ENCODE measurements at regions of chr6 and their contacts with region 1.

Region 1: DNA sequence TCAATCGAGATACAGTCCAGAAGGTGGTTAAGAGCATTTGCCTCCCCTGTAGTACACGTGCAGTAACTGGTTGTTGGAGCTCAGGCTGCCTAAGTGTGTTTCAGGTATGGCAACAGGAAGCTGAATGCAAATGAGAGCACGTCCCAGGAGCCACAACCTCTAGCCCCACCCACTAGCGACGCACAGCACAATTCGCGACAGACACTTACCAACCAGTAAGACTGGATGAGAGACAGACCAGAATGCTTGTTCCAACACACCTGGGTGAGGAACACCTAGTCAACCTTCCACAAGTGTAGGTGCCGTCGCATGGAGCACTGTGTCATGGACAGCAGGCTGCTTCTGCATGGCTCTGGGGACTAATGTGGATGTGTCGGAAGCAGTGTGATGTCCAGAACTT is 7.2 kb upstream of the SERPINB1 start:
- DNase-seq: no peak
- ATAC-seq: peak; percentile 36
- H3K4me3 ChIP-seq: no peak overlapping the region
- H3K27ac ChIP-seq: no peak overlapping the region
- H3K4me1 ChIP-seq: peaks cover 17% of the 10 kb centered on the region
- H3K27me3 ChIP-seq: no peaks in the 10 kb centered on the region
- CTCF ChIP-seq: no peak
- EP300 ChIP-seq: no peak
- POLR2A ChIP-seq: no peak
- RAD21 ChIP-seq: no peak

Region 2: GRCh38 chr6:2396846-2397630 is 451.8 kb before region 1 on chr6:
- CTCF ChIA-PET with region 1: no interaction called
- POLR2A ChIA-PET with region 1: no interaction called
- RAD21 ChIA-PET with region 1: no interaction called
- SMC1A ChIA-PET with region 1: no interaction called
- in situ Hi-C with region 1: no loop called
- intact Hi-C with region 1: no loop called
- DNase-seq: no peak
- ATAC-seq: no peak
- H3K4me3 ChIP-seq: no peak overlapping the region
- H3K27ac ChIP-seq: no peak overlapping the region
- H3K4me1 ChIP-seq: no peaks in the 10 kb centered on the region
- H3K27me3 ChIP-seq: no peaks in the 10 kb centered on the region; a peak in 1 of 4 replicates
- CTCF ChIP-seq: no peak
- EP300 ChIP-seq: no peak
- POLR2A ChIP-seq: no peak
- RAD21 ChIP-seq: no peak

Region 3: GRCh38 chr6:2611090-2611489 is 237.8 kb before region 1 on chr6:
- CTCF ChIA-PET with region 1: no interaction called
- POLR2A ChIA-PET with region 1: no interaction called
- RAD21 ChIA-PET with region 1: no interaction called
- SMC1A ChIA-PET with region 1: no interaction called
- in situ Hi-C with region 1: no loop called
- intact Hi-C with region 1: no loop called
- DNase-seq: no peak
- ATAC-seq: no peak
- H3K4me3 ChIP-seq: no peak overlapping the region
- H3K27ac ChIP-seq: no peak overlapping the region
- H3K4me1 ChIP-seq: no peaks in the 10 kb centered on the region
- H3K27me3 ChIP-seq: peaks cover 0 to 7% of the 10 kb centered on the region in 2 experiments; a peak in 3 of 4 replicates
- CTCF ChIP-seq: no peak
- EP300 ChIP-seq: no peak
- POLR2A ChIP-seq: no peak
- RAD21 ChIP-seq: no peak

Region 4: DNA sequence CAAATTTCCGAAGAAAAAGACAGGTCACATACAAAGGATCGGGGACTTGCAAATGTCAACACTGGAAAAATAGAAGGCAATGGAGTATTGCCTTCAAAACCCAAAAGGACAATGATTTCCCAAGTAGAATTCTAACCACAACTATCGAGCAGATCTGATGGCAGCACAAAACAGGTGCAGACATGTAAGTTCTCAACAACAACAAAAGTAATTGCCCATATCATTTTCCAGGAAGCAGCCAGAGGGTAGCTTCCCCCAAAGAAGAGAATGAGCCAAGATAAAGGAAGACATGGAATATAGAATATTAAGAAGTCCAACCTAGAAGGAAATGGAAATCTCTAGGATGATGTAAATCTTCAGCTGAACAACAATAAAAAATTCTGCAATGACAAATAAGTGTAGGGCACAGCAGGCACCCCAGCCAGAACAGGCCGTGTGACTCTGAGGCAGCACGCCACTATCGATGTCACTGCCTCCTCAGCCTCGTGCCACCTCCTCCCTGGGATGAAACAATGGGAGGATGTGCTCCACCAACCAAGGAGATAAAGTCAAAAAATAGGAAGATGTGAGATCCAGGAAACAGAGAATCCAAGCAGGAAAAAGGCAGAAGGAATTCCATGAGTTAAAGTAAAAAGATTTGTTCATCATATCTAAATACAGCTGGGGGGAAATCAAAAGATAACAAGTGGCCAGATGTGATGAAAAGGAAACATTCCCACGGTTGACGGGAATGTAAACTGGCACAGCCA is 41.3 kb before region 1 on chr6:
- CTCF ChIA-PET with region 1: no interaction called
- POLR2A ChIA-PET with region 1: no interaction called
- RAD21 ChIA-PET with region 1: no interaction called
- SMC1A ChIA-PET with region 1: no interaction called
- in situ Hi-C with region 1: no loop called
- intact Hi-C with region 1: no loop called
- DNase-seq: no peak
- ATAC-seq: no peak
- H3K4me3 ChIP-seq: no peak overlapping the region
- H3K27ac ChIP-seq: no peak overlapping the region
- H3K4me1 ChIP-seq: no peaks in the 10 kb centered on the region
- H3K27me3 ChIP-seq: no peaks in the 10 kb centered on the region
- CTCF ChIP-seq: no peak
- EP300 ChIP-seq: no peak
- POLR2A ChIP-seq: no peak
- RAD21 ChIP-seq: no peak

Region 5: DNA sequence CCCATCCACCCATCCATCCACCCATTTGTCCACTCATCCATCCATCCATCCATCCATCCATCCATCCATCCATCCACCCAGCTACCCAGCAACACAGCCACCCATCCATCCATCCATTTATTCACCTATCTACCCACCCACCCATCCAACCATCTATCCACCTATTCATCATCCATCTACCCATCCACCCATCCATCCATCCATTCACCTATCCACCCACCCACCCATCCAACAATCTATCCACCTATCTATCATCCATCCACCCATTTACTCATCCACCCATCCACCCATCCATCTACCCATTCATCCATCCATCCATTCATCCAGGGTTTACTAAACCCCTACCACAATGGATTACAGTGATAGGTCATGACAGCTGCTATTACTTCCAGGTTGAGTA is 14.6 kb before region 1 on chr6:
- CTCF ChIA-PET with region 1: interaction called, 5 read pairs
- POLR2A ChIA-PET with region 1: no interaction called
- RAD21 ChIA-PET with region 1: interaction called, 3 read pairs
- SMC1A ChIA-PET with region 1: interaction called, 12 read pairs
- in situ Hi-C with region 1: no loop called
- intact Hi-C with region 1: no loop called
- DNase-seq: no peak
- ATAC-seq: no peak
- H3K4me3 ChIP-seq: no peak overlapping the region
- H3K27ac ChIP-seq: no peak overlapping the region
- H3K4me1 ChIP-seq: no peaks in the 10 kb centered on the region
- H3K27me3 ChIP-seq: no peaks in the 10 kb centered on the region; a peak in 2 of 4 replicates
- CTCF ChIP-seq: no peak
- EP300 ChIP-seq: no peak
- POLR2A ChIP-seq: no peak
- RAD21 ChIP-seq: no peak

Region 6: GRCh38 chr6:2876210-2877056 is 27.6 kb after region 1 on chr6:
- CTCF ChIA-PET with region 1: interaction called, 25 read pairs
- POLR2A ChIA-PET with region 1: interaction called, 108 read pairs
- RAD21 ChIA-PET with region 1: interaction called, 77 read pairs
- SMC1A ChIA-PET with region 1: interaction called, 8 read pairs
- in situ Hi-C with region 1: no loop called
- intact Hi-C with region 1: loop called (anchors 1 kb)
- DNase-seq: no peak
- ATAC-seq: peak; percentile 51
- H3K4me3 ChIP-seq: 0 out of 2 replicates have a peak overlapping the region, but pooled peaks have one; percentile 18
- H3K27ac ChIP-seq: no peak overlapping the region
- H3K4me1 ChIP-seq: peaks cover 36% of the 10 kb centered on the region
- H3K27me3 ChIP-seq: no peaks in the 10 kb centered on the region
- CTCF ChIP-seq: no peak
- EP300 ChIP-seq: no peak
- POLR2A ChIP-seq: no peak; the same call in 1 of the 2 replicates
- RAD21 ChIP-seq: no peak

Region 7: GRCh38 chr6:2911171-2911570 is 62.3 kb after region 1 on chr6:
- CTCF ChIA-PET with region 1: interaction called, 143 read pairs
- POLR2A ChIA-PET with region 1: interaction called, 7 read pairs
- RAD21 ChIA-PET with region 1: interaction called, 88 read pairs
- SMC1A ChIA-PET with region 1: interaction called, 136 read pairs
- in situ Hi-C with region 1: loop called (anchors 10 kb)
- intact Hi-C with region 1: loop called (anchors 1 kb)
- DNase-seq: no peak
- ATAC-seq: peak; percentile 84
- H3K4me3 ChIP-seq: no peak overlapping the region
- H3K27ac ChIP-seq: no peak overlapping the region
- H3K4me1 ChIP-seq: peaks cover 13% of the 10 kb centered on the region
- H3K27me3 ChIP-seq: no peaks in the 10 kb centered on the region; a peak in 1 of 4 replicates
- CTCF ChIP-seq: no peak
- EP300 ChIP-seq: no peak
- POLR2A ChIP-seq: no peak
- RAD21 ChIP-seq: no peak

Region 8: DNA sequence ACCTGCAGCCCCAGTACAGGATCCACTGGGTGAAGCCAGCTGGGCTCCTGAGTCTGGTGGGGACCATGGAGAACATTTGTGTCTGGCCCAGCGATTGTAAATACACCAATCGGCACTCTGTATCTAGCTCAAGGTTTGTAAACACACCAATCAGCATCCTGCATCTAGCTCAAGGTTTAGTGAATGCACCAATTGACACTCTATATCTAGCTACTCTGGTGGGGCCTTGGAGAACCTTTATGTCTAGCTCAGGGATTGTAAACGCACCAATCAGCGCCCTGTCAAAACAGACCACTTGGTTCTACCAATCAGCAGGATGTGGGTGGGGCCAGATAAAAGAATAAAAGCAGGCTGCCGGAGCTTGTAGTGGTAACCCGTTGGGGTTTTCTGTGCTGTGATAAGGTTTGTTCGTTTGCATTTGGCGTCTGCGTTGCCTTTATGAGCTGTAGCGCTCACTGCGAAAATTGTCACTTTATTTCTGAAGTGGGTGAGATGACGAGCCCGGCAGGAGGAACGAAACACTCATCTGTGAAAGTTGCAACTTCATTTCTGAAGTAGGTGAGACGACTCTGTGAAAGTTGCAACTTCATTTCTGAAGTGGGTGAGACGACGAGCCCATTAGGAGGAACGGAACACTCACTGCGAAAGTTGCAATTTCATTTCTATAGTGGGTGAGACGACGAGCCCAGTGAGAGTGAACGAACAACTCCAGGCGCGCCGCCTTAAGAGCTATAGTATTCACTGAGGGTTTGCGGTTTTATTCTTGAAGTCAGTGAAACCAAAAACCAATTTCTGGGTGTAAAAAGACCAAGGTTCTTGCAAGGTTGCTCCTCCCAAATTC is 91.4 kb after region 1 on chr6:
- CTCF ChIA-PET with region 1: interaction called, 193 read pairs
- POLR2A ChIA-PET with region 1: no interaction called
- RAD21 ChIA-PET with region 1: interaction called, 129 read pairs
- SMC1A ChIA-PET with region 1: interaction called, 151 read pairs
- in situ Hi-C with region 1: no loop called
- intact Hi-C with region 1: no loop called
- DNase-seq: peak; percentile 99
- ATAC-seq: peak; percentile 97
- H3K4me3 ChIP-seq: no peak overlapping the region
- H3K27ac ChIP-seq: peak overlapping the region; percentile 17; the same call in 1 of the 2 replicates
- H3K4me1 ChIP-seq: peaks cover 36% of the 10 kb centered on the region
- H3K27me3 ChIP-seq: peaks cover 0 to 6% of the 10 kb centered on the region in 2 experiments
- CTCF ChIP-seq: no peak
- EP300 ChIP-seq: peak; percentile 64 to 93
- POLR2A ChIP-seq: peak; percentile 72
- RAD21 ChIP-seq: no peak

Region 9: GRCh38 chr6:3410385-3411360 is 561.8 kb after region 1 on chr6:
- CTCF ChIA-PET with region 1: no interaction called
- POLR2A ChIA-PET with region 1: no interaction called
- RAD21 ChIA-PET with region 1: no interaction called
- SMC1A ChIA-PET with region 1: no interaction called
- in situ Hi-C with region 1: no loop called
- intact Hi-C with region 1: no loop called
- DNase-seq: no peak
- ATAC-seq: peak; percentile 93
- H3K4me3 ChIP-seq: no peak overlapping the region
- H3K27ac ChIP-seq: no peak overlapping the region
- H3K4me1 ChIP-seq: peaks cover 9% of the 10 kb centered on the region
- H3K27me3 ChIP-seq: no peaks in the 10 kb centered on the region
- CTCF ChIP-seq: peak; percentile 55 to 75 (median 73)
- EP300 ChIP-seq: no peak
- POLR2A ChIP-seq: no peak
- RAD21 ChIP-seq: peak; percentile 68